ENCODE measurements at regions of chr11 and their contacts with region 1.

Region 1: GRCh38 chr11:809287-810039 is at the start of gene RPLP2:
- DNase-seq: peak; percentile 99
- ATAC-seq: peak; percentile 86
- H3K4me3 Mint-ChIP-seq: peak within 1 kb of the TSS; percentile 94
- H3K27ac Mint-ChIP-seq: peak within 1 kb of the TSS; percentile 97
- H3K4me1 Mint-ChIP-seq: peaks cover 30% of the 10 kb centered on the region
- H3K27me3 Mint-ChIP-seq: no peaks in the 10 kb centered on the region
- total RNA-seq, gene RPLP2: 2,132 to 3,230 TPM

Region 2: DNA sequence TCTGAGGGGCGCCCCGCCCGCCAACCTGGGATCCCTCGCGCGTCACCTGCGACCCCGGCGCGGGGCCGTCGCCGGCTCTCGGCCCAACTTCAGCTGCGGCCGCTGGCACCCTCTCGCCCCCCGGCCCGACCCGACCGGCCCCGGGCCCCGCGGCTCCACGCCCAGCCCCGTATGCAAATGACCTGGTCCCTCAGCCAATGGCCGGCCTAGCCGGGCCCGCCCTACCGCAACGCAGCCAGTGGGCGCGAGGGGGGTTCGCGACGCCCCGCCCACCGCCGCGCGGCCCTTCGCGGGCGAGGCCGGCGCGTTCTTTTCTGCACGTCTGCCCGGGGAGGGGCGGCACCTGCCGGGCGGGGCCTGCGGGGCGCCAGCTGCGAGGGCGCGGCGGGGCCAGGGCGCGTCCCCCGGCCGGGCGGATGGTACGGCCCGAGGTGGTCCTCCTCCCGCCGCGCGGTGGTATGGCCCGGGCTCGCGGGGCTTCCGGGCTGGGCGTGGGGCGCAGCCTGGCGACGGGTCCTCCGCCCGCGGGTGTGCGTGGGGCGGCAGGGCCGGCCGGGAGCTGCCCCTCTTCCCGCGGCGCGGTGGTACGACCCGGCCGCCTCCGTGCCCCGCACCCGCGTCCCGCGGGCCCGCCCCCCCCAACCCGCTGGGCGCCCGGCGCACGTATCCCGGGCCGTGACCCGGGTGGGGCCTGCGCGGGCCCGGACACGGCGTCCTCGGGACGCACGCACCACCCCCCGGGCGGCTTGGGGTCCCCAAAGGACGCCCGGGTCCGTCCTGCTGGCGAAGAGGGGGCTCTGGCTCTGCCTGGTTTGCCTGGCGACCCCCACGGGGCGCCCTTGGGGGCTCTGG is 240.9 kb before region 1 on chr11:
- CTCF ChIA-PET with region 1: no interaction called
- POLR2A ChIA-PET with region 1: no interaction called
- intact Hi-C with region 1: loop called in 1 of 2 experiments (anchors 1 kb)
- DNase-seq: peak; percentile 97
- ATAC-seq: peak; percentile 93
- H3K4me3 Mint-ChIP-seq: peak overlapping the region; percentile 88
- H3K27ac Mint-ChIP-seq: peak overlapping the region; percentile 72
- H3K4me1 Mint-ChIP-seq: no peaks in the 10 kb centered on the region
- H3K27me3 Mint-ChIP-seq: no peaks in the 10 kb centered on the region

Region 3: DNA sequence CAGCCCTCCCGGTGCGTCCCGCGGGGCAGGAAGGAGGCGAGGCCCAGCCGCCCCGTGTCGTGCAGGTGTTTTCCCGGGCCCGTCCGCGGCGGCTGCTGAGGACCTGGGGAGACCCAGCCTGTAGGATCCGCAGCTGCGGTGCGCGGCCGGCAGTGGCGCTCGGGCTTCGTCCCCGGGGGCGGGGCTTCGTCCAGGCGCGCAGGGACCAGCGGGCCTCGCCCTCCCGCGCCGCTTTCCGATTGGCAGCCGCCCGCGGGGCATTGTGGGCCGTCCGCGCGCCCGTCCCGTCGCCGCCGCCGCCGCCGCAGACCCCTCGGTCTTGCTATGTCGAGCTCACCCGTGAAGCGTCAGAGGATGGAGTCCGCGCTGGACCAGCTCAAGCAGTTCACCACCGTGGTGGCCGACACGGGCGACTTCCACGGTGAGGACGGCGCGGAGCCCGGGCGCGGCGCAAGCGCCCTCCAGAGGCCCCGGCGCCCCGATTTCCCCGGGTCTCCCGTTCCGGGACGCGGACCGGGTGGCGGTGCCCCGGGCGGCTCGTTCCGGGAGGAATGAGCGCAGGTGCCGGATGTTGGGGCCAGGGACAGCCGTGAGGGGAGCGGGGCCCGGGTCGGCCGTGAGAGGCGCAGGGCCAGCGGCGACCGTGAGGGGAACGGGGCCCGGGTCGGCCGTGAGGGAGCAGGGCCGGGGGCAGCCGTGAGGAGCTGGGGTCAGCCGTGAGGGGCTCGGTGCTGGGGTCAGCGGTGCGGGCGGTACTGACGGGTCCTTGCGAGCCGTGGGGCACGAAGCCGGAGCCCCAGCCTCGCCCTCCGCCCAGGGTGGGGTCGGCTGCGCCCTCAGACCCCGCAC is 62.1 kb before region 1 on chr11 and contains the start of gene TALDO1:
- CTCF ChIA-PET with region 1: no interaction called
- POLR2A ChIA-PET with region 1: no interaction called
- intact Hi-C with region 1: loop called in 1 of 2 experiments (anchors 1 kb)
- DNase-seq: peak; percentile 92
- ATAC-seq: peak; percentile 91
- H3K4me3 Mint-ChIP-seq: peak within 1 kb of the TSS; percentile 82
- H3K27ac Mint-ChIP-seq: peak within 1 kb of the TSS; percentile 72
- H3K4me1 Mint-ChIP-seq: peaks cover 20% of the 10 kb centered on the region
- H3K27me3 Mint-ChIP-seq: no peaks in the 10 kb centered on the region
- total RNA-seq, gene TALDO1: 239 to 246 TPM

Region 4: GRCh38 chr11:798093-798713 is 11.3 kb before region 1 on chr11 and contains the start of gene SLC25A22:
- CTCF ChIA-PET with region 1: no interaction called
- POLR2A ChIA-PET with region 1: interaction called, 10 read pairs
- intact Hi-C with region 1: loop called (anchors 1 kb)
- DNase-seq: peak; percentile 92
- ATAC-seq: peak; percentile 63
- H3K4me3 Mint-ChIP-seq: peak within 1 kb of the TSS; percentile 79
- H3K27ac Mint-ChIP-seq: peak within 1 kb of the TSS; percentile 67
- H3K4me1 Mint-ChIP-seq: peaks cover 13% of the 10 kb centered on the region
- H3K27me3 Mint-ChIP-seq: no peaks in the 10 kb centered on the region
- total RNA-seq, gene SLC25A22: 33.9 to 36.6 TPM